Posterior vena cava (tissue), 2 donors: ENCODE measurements at regions of chr2 and their contacts with region 1.

Region 1: GRCh38 chr2:99340669-99341236 is 3.6 kb downstream of the EIF5B start:
- DNase-seq: no peak

Region 2: DNA sequence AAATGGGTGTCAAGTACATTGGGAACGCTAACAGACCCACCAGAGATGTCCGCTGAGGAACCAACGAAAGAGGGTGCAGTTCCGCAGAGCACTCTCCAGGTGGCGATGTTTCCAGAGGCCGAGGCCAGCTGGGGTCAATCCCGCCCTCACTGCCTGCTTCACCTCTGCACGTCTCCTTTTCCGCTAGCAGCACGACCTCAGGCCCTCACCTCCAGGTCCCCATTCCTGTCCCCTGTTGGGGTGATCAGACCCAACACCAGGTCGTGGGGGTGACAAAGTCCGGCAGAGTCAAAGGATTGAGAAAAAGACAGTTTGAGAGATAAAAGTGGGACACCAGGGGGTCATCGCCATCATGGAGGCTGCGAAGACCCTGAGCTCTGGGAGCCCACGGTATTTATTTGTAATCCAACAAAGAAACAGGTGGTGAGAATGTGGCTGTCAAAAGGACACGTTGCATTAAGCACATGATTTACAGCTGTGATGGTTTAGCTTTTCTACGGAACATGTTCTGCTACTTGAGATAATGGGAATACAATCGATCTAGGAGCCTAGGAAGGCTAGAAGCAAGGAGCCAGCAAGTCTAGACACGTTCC is 1600.1 kb before region 1 on chr2:
- intact Hi-C with region 1: loop called in 1 of 2 experiments (anchors 5 kb)
- DNase-seq: peak; percentile 81

Region 3: DNA sequence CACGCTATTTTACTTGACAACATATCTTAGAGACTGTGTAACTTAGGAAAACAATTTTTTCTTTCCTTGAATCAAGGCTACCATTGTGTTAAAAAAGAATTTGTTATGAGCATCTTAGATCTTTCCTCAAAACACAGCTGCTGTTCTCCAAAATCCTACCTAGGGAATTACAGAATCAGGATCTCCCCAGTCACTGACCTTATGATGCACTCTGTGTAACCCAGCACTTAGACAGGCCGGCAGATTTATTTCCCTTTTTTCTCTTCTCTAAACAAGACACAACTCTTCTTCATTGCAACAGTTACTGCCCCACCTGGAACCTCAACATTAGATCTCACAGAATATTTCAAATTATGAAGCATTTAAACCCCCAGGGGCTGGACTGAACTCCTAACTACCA is 212.8 kb before region 1 on chr2:
- intact Hi-C with region 1: no loop called
- DNase-seq: no peak

Region 4: GRCh38 chr2:99325363-99325762 is 15.4 kb before region 1 on chr2:
- intact Hi-C with region 1: no loop called
- DNase-seq: no peak